Right ventricle myocardium superior (tissue), 1 donor: ENCODE measurements at regions of chr16 and their contacts with region 1.

Region 1: GRCh38 chr16:4802659-4803287 is 340 bp upstream of the ROGDI start:
- DNase-seq: peak; percentile 95
- ATAC-seq: peak; percentile 91

Region 2: DNA sequence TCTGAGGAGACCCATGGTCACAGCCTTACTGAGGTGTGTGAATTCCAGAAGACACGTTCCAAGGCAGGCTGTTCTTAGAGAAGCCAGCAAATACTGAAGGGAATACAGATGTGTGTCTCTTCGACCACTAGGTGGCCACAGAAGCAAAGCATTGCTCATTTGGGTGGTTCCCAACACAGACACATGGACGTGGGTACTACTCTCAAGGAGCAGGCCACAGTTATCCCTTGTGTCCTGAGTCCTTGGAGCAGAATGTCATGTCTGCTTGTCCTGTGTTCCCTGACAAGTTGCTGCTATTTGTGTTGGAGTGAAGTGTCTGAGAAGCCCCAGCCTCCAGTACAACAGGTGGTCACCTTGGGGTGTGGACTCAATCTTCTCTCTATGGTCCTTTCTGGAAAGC is 296.3 kb before region 1 on chr16:
- intact Hi-C with region 1: no loop called
- DNase-seq: no peak
- ATAC-seq: peak; percentile 77

Region 3: GRCh38 chr16:4846891-4847773 is 44.4 kb after region 1 on chr16 and contains the starts of genes GLYR1 and UBN1:
- intact Hi-C with region 1: loop called (anchors 5 kb)
- DNase-seq: peak; percentile 100
- ATAC-seq: peak; percentile 96
- total RNA-seq, gene GLYR1: 93.3 TPM
- total RNA-seq, gene UBN1: 42.1 TPM

Region 4: DNA sequence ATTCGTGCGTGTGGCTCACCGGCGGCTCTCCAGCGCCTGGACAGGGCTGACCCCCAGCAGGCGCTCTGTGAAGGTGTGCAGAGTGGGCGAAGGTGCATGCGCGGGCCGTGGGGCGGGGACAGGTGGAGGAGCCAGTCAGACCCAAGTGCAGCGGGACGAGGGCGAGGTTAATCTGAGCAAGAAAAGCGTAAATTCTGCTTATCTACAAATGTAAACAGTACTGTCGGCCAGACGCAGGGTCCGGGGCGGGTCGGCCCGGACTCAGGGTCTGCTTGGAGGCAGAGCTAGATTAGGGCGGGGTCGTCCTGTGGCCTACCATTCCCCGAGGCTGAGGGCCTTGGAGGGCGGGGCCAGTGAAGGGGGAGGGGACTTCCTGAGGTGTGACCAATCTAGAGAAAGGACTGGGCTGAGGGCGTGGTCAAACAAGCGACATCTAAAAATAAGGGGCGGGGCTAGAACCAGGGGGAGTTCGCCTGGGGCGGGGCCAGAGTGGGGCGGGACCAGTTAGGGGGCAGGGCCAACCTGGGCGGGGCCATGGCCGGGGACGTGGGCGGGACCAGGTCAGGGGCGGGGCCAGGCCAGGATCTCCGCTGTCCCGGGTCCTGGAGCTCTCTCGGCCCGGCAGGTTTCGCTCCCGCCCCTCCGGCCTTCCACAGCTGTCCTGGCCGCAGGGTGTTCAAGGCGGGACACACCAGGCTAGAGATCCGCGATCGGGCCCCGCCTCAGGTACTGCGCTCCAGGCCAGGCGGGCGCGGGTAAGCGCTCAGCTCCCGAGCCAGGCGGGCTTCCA is 155.1 kb after region 1 on chr16 and contains the start of gene SEC14L5:
- intact Hi-C with region 1: loop called (anchors 10 kb)
- DNase-seq: peak; percentile 97
- ATAC-seq: peak; percentile 97
- total RNA-seq, gene SEC14L5: 26.2 TPM